ENCODE measurements at regions of chr12 and their contacts with region 1.

Region 1: DNA sequence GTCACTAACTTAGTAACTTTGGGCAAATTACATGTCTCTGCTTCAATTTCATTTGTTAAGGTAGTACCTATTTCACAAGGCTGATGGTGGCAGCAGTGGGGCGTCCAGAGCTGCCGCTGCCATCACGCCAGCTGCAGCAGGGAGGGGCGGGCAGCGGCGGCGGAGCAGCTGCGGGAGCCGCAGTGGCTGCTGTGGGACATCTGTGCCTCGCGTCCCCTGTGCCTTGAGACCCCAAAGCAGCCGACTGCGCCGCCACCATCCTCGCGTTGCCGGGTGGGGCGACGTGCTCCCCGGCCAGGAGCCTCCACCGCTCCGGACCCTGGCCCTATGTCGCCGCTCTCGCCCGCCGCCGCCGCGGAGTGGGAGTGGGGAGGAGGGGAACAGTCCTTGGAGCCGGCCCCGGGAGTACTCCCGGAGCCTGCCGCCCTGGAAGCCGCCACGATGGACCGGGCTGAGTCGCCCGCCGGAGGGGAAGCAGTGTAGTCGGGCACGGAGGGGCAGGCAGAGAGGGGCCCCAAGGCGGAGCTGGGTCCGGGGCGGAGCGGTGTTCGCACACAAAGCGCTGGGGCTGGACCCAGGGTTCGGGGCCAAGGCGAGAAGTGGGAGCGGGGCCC is 51.4 kb downstream of the A2M start:
- DNase-seq: peak; percentile 80 to 87
- H3K4me3 ChIP-seq: peak overlapping the region; percentile 94
- H3K4me3 Mint-ChIP-seq: peak overlapping the region; percentile 74
- H3K27ac Mint-ChIP-seq: peak overlapping the region; percentile 66
- H3K4me1 ChIP-seq: peaks cover 8% of the 10 kb centered on the region
- H3K4me1 Mint-ChIP-seq: peaks cover 8% of the 10 kb centered on the region
- H3K27me3 ChIP-seq: no peaks in the 10 kb centered on the region
- H3K27me3 Mint-ChIP-seq: no peaks in the 10 kb centered on the region
- CTCF ChIP-seq: peak; percentile 64 to 72

Region 2: GRCh38 chr12:8922543-8922942 is 141.8 kb before region 1 on chr12:
- CTCF ChIA-PET with region 1: no interaction called
- POLR2A ChIA-PET with region 1: no interaction called
- intact Hi-C with region 1: no loop called
- DNase-seq: peak in 1 of 2 experiments; percentile 14
- H3K4me3 ChIP-seq: no peak overlapping the region
- H3K4me3 Mint-ChIP-seq: no peak overlapping the region
- H3K27ac Mint-ChIP-seq: no peak overlapping the region
- H3K4me1 ChIP-seq: no peaks in the 10 kb centered on the region
- H3K4me1 Mint-ChIP-seq: no peaks in the 10 kb centered on the region
- H3K27me3 ChIP-seq: no peaks in the 10 kb centered on the region
- H3K27me3 Mint-ChIP-seq: no peaks in the 10 kb centered on the region
- CTCF ChIP-seq: no peak

Region 3: DNA sequence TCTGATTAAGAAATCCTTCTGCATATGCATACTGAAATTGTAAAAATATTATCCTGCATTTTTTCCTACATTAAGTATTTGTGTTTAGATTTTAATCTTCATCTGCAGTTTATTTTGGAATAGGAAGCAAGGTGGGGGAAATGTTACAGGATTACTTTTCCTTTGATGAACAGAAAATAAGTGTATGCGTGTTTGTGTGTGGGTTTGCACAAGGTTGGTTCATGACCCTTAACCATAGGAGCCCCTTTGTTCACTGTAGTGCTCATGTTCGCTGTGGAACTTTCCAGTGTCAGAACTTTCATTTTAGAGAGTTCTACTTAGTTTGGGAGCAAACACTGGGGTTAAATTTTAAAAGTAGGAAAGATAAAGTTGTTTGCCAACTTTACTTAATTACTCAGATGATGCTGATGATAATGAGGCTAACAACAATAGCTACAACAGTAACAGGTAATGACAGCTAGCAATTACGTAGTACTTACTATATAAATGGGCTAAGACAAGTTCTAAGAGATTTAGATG is 57.8 kb after region 1 on chr12:
- CTCF ChIA-PET with region 1: no interaction called
- POLR2A ChIA-PET with region 1: no interaction called
- intact Hi-C with region 1: loop called (anchors 1 kb)
- DNase-seq: peak; percentile 60 to 65
- H3K4me3 ChIP-seq: no peak overlapping the region
- H3K4me3 Mint-ChIP-seq: no peak overlapping the region
- H3K27ac Mint-ChIP-seq: peak overlapping the region; percentile 19
- H3K4me1 ChIP-seq: peaks cover 13% of the 10 kb centered on the region
- H3K4me1 Mint-ChIP-seq: peaks cover 7% of the 10 kb centered on the region
- H3K27me3 ChIP-seq: no peaks in the 10 kb centered on the region
- H3K27me3 Mint-ChIP-seq: no peaks in the 10 kb centered on the region
- CTCF ChIP-seq: no peak

Region 4: DNA sequence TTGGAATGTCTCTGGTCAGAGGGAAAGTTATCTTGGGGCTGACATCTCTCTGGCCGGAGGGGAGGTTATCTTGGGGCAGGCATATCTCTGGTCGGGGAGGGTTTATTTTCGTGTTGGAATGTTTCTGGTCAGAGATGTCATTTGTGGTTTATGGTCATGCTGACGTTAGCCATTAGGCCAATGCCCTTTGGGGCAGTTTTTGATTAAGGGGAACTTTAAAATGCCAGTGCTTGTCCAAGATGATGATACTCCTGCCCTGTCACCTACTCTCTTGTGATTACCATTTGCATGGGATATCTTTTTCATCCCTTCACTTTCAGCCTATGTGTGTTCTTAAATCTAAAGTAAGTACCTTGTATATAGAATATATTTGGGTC is 80.4 kb after region 1 on chr12:
- CTCF ChIA-PET with region 1: no interaction called
- POLR2A ChIA-PET with region 1: no interaction called
- intact Hi-C with region 1: no loop called
- DNase-seq: peak; percentile 49 to 68
- H3K4me3 ChIP-seq: no peak overlapping the region
- H3K4me3 Mint-ChIP-seq: no peak overlapping the region
- H3K27ac Mint-ChIP-seq: peak overlapping the region; percentile 1
- H3K4me1 ChIP-seq: peaks cover 13% of the 10 kb centered on the region
- H3K4me1 Mint-ChIP-seq: peaks cover 21% of the 10 kb centered on the region
- H3K27me3 ChIP-seq: no peaks in the 10 kb centered on the region
- H3K27me3 Mint-ChIP-seq: no peaks in the 10 kb centered on the region
- CTCF ChIP-seq: no peak

Region 5: GRCh38 chr12:9204380-9204779 is 140.1 kb after region 1 on chr12:
- CTCF ChIA-PET with region 1: interaction called, 5 read pairs
- POLR2A ChIA-PET with region 1: no interaction called
- intact Hi-C with region 1: loop called (anchors 5 kb)
- DNase-seq: no peak
- H3K4me3 ChIP-seq: no peak overlapping the region
- H3K4me3 Mint-ChIP-seq: no peak overlapping the region
- H3K27ac Mint-ChIP-seq: no peak overlapping the region
- H3K4me1 ChIP-seq: no peaks in the 10 kb centered on the region; the same call in 1 of the 2 replicates
- H3K4me1 Mint-ChIP-seq: peaks cover 13% of the 10 kb centered on the region
- H3K27me3 ChIP-seq: no peaks in the 10 kb centered on the region
- H3K27me3 Mint-ChIP-seq: no peaks in the 10 kb centered on the region
- CTCF ChIP-seq: no peak

Region 6: GRCh38 chr12:9331218-9331626 is 266.9 kb after region 1 on chr12:
- CTCF ChIA-PET with region 1: interaction called, 9 read pairs
- POLR2A ChIA-PET with region 1: no interaction called
- intact Hi-C with region 1: loop called (anchors 2 kb)
- DNase-seq: peak in 1 of 2 experiments; percentile 80
- H3K4me3 ChIP-seq: no peak overlapping the region
- H3K4me3 Mint-ChIP-seq: no peak overlapping the region
- H3K27ac Mint-ChIP-seq: no peak overlapping the region
- H3K4me1 ChIP-seq: peaks cover 13% of the 10 kb centered on the region
- H3K4me1 Mint-ChIP-seq: peaks cover 6% of the 10 kb centered on the region
- H3K27me3 ChIP-seq: no peaks in the 10 kb centered on the region
- H3K27me3 Mint-ChIP-seq: peaks cover 3% of the 10 kb centered on the region
- CTCF ChIP-seq: peak; percentile 96 to 98

Region 7: DNA sequence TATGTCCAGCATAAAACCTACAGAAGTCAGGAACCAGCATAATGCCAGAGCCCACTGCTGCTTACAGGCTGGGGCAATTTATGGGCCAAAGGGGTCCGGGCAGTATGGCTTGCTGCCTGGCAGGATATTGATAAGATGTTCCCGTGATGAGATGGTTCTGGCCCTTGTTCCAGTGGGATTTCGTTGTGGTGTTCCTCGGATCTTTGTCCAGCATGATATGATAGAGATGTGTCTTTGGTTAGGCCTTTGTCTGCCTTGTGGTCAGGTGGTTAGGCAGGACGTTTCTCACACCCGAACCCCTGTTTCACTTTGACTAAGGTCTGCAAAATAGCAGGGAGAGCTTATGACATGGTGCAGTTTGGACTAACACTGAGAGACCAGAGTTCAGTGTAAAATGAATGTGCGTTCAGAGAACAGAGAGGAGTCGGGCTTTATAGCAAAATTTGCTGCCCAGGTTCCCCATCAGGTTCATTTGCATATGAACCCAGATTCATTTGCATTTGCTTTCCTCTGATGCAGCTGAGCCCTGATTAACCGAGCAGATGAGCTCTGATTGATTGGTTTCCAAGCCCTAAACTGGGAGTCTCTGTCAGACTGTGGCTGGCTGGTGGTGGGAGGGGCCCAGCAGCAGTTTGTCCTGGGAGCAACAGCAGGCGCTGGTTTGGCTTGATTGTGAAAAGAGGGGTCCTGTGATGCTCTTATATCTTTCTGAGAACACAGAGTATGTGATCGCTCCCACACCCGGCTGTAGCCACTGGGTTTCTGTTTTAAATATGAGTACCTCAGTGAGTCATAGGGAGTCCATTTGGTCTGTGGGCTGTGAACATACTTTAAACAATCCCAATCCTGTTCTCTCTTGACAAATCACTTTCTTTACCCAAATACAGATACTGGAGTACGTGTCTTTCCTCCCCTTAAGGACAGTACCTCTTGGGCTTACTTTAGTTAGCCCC is 300.2 kb after region 1 on chr12:
- CTCF ChIA-PET with region 1: no interaction called
- POLR2A ChIA-PET with region 1: no interaction called
- intact Hi-C with region 1: no loop called
- DNase-seq: no peak
- H3K4me3 ChIP-seq: no peak overlapping the region
- H3K4me3 Mint-ChIP-seq: no peak overlapping the region
- H3K27ac Mint-ChIP-seq: no peak overlapping the region
- H3K4me1 ChIP-seq: no peaks in the 10 kb centered on the region
- H3K4me1 Mint-ChIP-seq: no peaks in the 10 kb centered on the region
- H3K27me3 ChIP-seq: no peaks in the 10 kb centered on the region
- H3K27me3 Mint-ChIP-seq: peaks cover 22% of the 10 kb centered on the region
- CTCF ChIP-seq: no peak

Region 8: DNA sequence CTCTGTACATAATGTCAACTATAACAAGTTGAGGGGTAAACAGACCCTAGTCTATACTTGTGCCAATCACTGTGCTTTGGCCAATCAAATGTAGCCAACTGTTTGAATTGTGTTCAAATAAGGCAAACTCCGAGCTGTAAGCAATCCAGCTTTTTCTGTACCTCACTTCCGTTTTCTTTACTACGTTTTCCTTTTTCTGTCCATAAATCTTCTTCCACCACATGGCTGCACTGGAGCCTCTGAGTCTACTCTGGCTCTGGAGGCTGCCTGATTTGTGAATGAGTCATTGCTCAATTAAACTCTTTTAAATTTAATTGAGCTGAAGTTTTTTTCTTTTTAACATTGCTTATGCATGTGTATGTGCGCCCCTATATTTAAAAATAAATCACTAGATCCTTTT is 1004.8 kb after region 1 on chr12:
- CTCF ChIA-PET with region 1: no interaction called
- POLR2A ChIA-PET with region 1: no interaction called
- intact Hi-C with region 1: no loop called
- DNase-seq: no peak
- H3K4me3 ChIP-seq: no peak overlapping the region
- H3K4me3 Mint-ChIP-seq: no peak overlapping the region
- H3K27ac Mint-ChIP-seq: no peak overlapping the region
- H3K4me1 ChIP-seq: no peaks in the 10 kb centered on the region
- H3K4me1 Mint-ChIP-seq: no peaks in the 10 kb centered on the region
- H3K27me3 ChIP-seq: no peaks in the 10 kb centered on the region; the same call in 1 of the 2 replicates
- H3K27me3 Mint-ChIP-seq: peaks cover 50% of the 10 kb centered on the region
- CTCF ChIP-seq: no peak

Measured in Caco-2 (cell line).